ENCODE measurements at regions of chr2 and their contacts with region 1.

Region 1: DNA sequence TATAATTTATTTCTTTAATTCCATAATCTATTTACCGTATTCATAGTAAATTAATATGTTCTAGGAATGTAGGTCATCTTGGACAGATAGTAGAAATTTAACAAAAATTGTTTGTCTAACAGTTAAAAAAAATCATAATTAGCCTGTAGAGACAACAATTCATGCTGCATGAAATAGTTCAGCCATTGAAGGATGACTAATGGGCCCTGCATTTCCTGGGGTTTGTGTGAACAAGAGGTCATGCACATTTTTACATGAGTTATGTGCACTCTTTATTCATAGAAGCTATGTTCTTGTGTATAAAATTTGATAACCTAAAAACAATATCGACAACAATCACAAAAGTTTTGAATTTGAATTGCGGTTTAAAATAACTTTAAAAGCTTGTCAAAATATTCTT is 1663.6 kb downstream of the SUCLG1 start:
- DNase-seq: peak; percentile 81
- ATAC-seq: peak; percentile 82
- H3K4me3 ChIP-seq: peak overlapping the region; percentile 43; the same call in 1 of the 2 replicates
- H3K27ac ChIP-seq: peak overlapping the region; percentile 90
- H3K4me1 ChIP-seq: peaks cover 43% of the 10 kb centered on the region
- H3K27me3 ChIP-seq: no peaks in the 10 kb centered on the region
- CTCF ChIP-seq: no peak

Region 2: GRCh38 chr2:82487354-82487753 is 308.1 kb before region 1 on chr2:
- CTCF ChIA-PET with region 1: no interaction called
- POLR2A ChIA-PET with region 1: interaction called, 10 read pairs
- intact Hi-C with region 1: no loop called
- DNase-seq: peak; percentile 52
- ATAC-seq: peak; percentile 89
- H3K4me3 ChIP-seq: no peak overlapping the region
- H3K27ac ChIP-seq: no peak overlapping the region
- H3K4me1 ChIP-seq: peaks cover 12% of the 10 kb centered on the region
- H3K27me3 ChIP-seq: no peaks in the 10 kb centered on the region
- CTCF ChIP-seq: no peak

Region 3: DNA sequence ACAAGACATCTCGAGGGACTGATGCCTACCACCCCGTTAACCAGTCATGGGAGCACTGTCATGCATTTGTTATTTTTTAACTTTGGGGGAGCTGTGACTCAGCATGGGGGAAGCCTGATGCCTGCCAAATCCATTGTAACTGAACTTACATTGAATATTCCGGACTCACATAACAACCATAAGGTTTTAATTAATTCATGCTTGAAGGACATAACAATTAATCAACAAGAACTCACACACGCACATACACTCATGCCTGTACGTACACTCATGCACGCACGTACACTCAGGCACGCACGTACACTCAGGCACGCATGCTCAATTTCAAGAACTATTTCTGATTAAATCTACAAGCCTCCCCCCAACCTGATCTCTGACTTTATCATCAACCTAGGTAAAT is 24.5 kb after region 1 on chr2:
- CTCF ChIA-PET with region 1: no interaction called
- POLR2A ChIA-PET with region 1: no interaction called
- intact Hi-C with region 1: no loop called
- DNase-seq: no peak
- ATAC-seq: no peak
- H3K4me3 ChIP-seq: no peak overlapping the region
- H3K27ac ChIP-seq: no peak overlapping the region
- H3K4me1 ChIP-seq: no peaks in the 10 kb centered on the region
- H3K27me3 ChIP-seq: no peaks in the 10 kb centered on the region
- CTCF ChIP-seq: no peak

Region 4: GRCh38 chr2:83196225-83196624 is 400.8 kb after region 1 on chr2:
- CTCF ChIA-PET with region 1: no interaction called
- POLR2A ChIA-PET with region 1: no interaction called
- intact Hi-C with region 1: no loop called
- DNase-seq: peak; percentile 73
- ATAC-seq: peak; percentile 93
- H3K4me3 ChIP-seq: no peak overlapping the region
- H3K27ac ChIP-seq: no peak overlapping the region
- H3K4me1 ChIP-seq: no peaks in the 10 kb centered on the region
- H3K27me3 ChIP-seq: no peaks in the 10 kb centered on the region
- CTCF ChIP-seq: peak; percentile 78